Activated CD4-positive, alpha-beta T cell treated with anti-CD3 and anti-CD28 coated beads, Interleukin-2, amount 10 ng/mL, durations not matched to agents 24 days and 14 days (primary cell): ENCODE measurements at regions of chr1 and their contacts with region 1.

Region 1: DNA sequence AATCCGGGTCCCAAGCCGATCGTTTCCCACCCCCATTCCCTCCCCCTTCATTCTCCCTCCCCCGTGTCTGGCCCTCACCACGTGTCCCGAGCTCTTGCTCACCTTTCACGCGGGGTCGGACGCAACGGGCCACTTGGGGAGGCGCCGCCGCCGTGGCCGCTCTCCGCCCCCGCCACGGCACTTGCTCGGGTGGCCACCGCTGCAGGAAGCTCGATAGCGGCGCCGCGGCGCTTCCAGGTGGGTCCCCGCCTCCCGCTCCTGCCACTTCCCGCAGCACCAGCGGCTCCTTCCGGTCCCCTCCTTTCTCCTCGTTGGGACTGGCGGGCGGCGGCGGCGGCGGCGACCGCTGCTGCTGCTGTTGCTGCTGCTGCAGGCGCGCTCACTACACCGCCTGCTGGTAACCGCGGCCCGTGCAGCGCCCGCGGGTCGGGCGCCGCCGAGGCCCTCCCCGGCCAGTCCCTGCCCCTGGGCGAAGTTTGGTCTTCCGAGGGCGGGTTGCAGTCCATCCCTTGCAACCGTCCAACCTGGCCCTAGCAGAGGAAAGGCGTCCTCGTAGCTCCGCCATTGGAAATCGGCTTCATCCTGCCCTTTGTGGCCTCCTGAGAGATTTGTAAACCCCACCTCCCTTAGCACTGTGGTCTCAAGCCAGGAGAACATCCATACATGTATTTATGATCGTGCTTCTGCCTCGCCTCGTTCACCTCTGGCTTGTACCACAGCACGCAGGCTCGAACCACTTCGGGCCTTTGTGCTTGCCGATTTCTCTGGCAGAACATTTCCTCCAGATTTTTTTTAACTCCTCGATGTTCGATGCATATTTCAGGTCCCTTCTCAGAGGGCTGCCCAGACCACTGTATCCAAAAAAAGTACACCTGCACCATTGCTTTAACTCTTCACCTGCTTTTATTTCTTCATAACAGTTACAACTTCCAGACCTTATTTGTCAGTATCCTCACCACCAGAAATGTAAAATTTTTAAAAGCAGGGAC is 996 bp upstream of the ZZZ3 start:
- DNase-seq: peak; percentile 97
- H3K4me3 Mint-ChIP-seq: peak overlapping the region; percentile 91
- H3K27ac Mint-ChIP-seq: peak overlapping the region; percentile 94
- H3K4me1 Mint-ChIP-seq: peaks cover 22% of the 10 kb centered on the region
- H3K27me3 Mint-ChIP-seq: no peaks in the 10 kb centered on the region

Region 2: GRCh38 chr1:75785983-75786853 is 1897.2 kb before region 1 on chr1 and contains the start of gene RABGGTB:
- intact Hi-C with region 1: loop called (anchors 2 kb)
- DNase-seq: peak; percentile 98
- H3K4me3 Mint-ChIP-seq: peak within 1 kb of the TSS; percentile 89
- H3K27ac Mint-ChIP-seq: peak within 1 kb of the TSS; percentile 96
- H3K4me1 Mint-ChIP-seq: peaks cover 30% of the 10 kb centered on the region
- H3K27me3 Mint-ChIP-seq: peaks cover 6% of the 10 kb centered on the region
- total RNA-seq, gene RABGGTB: 235 and 237 TPM in 2 replicates

Region 3: DNA sequence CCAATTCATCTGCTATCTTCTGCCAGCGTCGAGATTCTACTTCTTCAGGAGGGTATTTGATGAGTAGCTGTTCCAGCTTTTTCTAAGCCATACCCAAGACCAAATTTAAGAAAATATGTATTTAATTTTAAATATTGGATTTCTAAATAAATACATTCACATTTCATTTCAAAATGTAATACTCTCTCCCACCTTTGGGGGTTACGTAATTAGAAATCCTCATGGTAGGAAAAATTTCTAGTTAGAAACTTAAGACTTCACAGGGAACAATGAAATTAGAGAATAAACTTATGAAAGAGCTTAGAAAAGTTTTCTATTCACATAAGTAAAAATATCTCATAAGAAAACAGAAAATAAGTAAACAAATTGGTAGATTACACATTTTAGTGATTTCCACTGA is 103.9 kb before region 1 on chr1:
- intact Hi-C with region 1: loop called (anchors 10 kb)
- DNase-seq: no peak
- H3K4me3 Mint-ChIP-seq: no peak overlapping the region
- H3K27ac Mint-ChIP-seq: no peak overlapping the region
- H3K4me1 Mint-ChIP-seq: no peaks in the 10 kb centered on the region
- H3K27me3 Mint-ChIP-seq: no peaks in the 10 kb centered on the region

Region 4: GRCh38 chr1:77779529-77780281 is 96.3 kb after region 1 on chr1 and contains the start of gene MIGA1:
- intact Hi-C with region 1: loop called (anchors 1 kb)
- DNase-seq: peak; percentile 96
- H3K4me3 Mint-ChIP-seq: peak within 1 kb of the TSS; percentile 97
- H3K27ac Mint-ChIP-seq: peak within 1 kb of the TSS; percentile 88
- H3K4me1 Mint-ChIP-seq: peaks cover 24% of the 10 kb centered on the region
- H3K27me3 Mint-ChIP-seq: no peaks in the 10 kb centered on the region
- total RNA-seq, gene MIGA1: 7.5 and 7.6 TPM in 2 replicates

Region 5: GRCh38 chr1:78004719-78005447 is 321.4 kb after region 1 on chr1 and contains the start of gene DNAJB4:
- intact Hi-C with region 1: loop called (anchors 1 kb)
- DNase-seq: peak; percentile 93
- H3K4me3 Mint-ChIP-seq: peak within 1 kb of the TSS; percentile 89
- H3K27ac Mint-ChIP-seq: peak within 1 kb of the TSS; percentile 98
- H3K4me1 Mint-ChIP-seq: peaks cover 29% of the 10 kb centered on the region
- H3K27me3 Mint-ChIP-seq: peaks cover 2% of the 10 kb centered on the region
- total RNA-seq, gene DNAJB4: 10.3 and 11.0 TPM in 2 replicates

Region 6: DNA sequence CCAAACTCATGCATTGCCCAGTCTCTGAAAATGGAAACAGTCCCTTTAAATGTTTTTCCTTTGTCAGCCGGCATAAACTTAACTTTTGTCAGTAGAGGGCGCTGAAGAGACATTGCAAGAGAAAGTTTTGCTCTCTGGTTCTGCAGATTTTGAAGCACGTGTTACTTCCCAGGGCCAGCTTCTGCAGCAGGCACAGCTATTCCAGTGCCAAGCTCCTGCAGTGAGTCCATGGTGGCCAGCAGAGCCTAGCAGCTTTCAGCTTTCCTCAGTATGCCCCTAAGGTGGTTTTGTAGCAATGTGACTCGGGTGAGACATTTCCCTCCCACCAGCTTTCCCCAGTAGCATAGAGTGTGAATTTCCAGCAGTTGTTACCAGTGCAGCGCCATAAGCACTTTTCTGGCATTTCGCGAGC is 934.2 kb after region 1 on chr1:
- intact Hi-C with region 1: loop called (anchors 5 kb)
- DNase-seq: peak; percentile 90
- H3K4me3 Mint-ChIP-seq: peak overlapping the region; percentile 43
- H3K27ac Mint-ChIP-seq: peak overlapping the region; percentile 19
- H3K4me1 Mint-ChIP-seq: peaks cover 34% of the 10 kb centered on the region
- H3K27me3 Mint-ChIP-seq: peaks cover 9% of the 10 kb centered on the region